ENCODE measurements at regions of chr17 and their contacts with region 1.

Region 1: DNA sequence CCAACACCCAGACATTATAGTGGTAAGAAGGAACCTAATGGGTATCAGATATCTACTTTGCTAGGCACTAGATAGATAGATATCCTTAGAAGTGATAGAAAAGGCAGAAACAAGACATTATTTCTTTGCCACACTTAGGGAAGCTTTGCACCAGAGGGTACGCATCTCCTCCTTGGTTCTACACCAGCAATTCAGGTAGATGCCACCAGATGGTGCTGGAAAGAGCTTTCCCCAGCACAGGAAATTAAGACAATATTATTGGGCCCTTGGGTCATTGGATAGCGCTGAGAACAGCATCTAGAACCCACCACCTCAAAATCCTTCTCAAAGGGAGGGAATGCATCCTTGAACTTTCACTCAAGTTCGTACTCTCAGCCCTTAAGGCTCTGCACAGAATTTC is 173.8 kb upstream of the CCL2 start:
- DNase-seq: peak; percentile 54
- ATAC-seq: peak; percentile 87
- H3K4me3 Mint-ChIP-seq: no peak overlapping the region
- H3K27ac Mint-ChIP-seq: no peak overlapping the region
- H3K4me1 Mint-ChIP-seq: peaks cover 23% of the 10 kb centered on the region
- H3K27me3 Mint-ChIP-seq: no peaks in the 10 kb centered on the region
- CTCF ChIP-seq: 0 out of 2 replicates have a peak, but pooled peaks have one; percentile 42

Region 2: GRCh38 chr17:34000639-34001038 is 80.6 kb before region 1 on chr17:
- CTCF ChIA-PET with region 1: no interaction called
- POLR2A ChIA-PET with region 1: no interaction called
- DNase-seq: no peak
- ATAC-seq: no peak
- H3K4me3 Mint-ChIP-seq: no peak overlapping the region
- H3K27ac Mint-ChIP-seq: no peak overlapping the region
- H3K4me1 Mint-ChIP-seq: no peaks in the 10 kb centered on the region; the same call in 1 of the 2 replicates
- H3K27me3 Mint-ChIP-seq: no peaks in the 10 kb centered on the region; the same call in 1 of the 2 replicates
- CTCF ChIP-seq: no peak

Region 3: DNA sequence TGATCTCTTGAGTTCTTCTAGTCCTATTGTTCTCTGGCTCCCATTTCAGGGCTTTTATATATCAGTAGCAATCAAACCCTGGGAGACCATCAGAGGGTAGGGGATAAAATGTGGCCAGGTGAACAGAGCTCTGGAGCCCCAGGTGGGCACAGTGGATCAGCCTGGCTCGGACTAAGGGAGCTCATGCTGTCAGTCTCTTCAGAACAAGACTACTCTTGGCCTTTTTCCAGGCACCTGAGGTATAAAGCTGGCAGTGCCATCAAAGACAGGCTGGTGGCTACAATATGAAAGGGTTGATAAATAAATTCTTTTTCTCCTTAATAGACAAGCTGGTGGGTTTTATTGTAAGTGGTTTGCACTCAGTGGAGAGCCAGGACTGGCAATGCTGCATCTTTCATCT is 13.8 kb after region 1 on chr17:
- CTCF ChIA-PET with region 1: no interaction called
- POLR2A ChIA-PET with region 1: no interaction called
- DNase-seq: no peak
- ATAC-seq: no peak
- H3K4me3 Mint-ChIP-seq: no peak overlapping the region
- H3K27ac Mint-ChIP-seq: no peak overlapping the region
- H3K4me1 Mint-ChIP-seq: peaks cover 16% of the 10 kb centered on the region
- H3K27me3 Mint-ChIP-seq: no peaks in the 10 kb centered on the region; the same call in 1 of the 2 replicates
- CTCF ChIP-seq: no peak

Region 4: DNA sequence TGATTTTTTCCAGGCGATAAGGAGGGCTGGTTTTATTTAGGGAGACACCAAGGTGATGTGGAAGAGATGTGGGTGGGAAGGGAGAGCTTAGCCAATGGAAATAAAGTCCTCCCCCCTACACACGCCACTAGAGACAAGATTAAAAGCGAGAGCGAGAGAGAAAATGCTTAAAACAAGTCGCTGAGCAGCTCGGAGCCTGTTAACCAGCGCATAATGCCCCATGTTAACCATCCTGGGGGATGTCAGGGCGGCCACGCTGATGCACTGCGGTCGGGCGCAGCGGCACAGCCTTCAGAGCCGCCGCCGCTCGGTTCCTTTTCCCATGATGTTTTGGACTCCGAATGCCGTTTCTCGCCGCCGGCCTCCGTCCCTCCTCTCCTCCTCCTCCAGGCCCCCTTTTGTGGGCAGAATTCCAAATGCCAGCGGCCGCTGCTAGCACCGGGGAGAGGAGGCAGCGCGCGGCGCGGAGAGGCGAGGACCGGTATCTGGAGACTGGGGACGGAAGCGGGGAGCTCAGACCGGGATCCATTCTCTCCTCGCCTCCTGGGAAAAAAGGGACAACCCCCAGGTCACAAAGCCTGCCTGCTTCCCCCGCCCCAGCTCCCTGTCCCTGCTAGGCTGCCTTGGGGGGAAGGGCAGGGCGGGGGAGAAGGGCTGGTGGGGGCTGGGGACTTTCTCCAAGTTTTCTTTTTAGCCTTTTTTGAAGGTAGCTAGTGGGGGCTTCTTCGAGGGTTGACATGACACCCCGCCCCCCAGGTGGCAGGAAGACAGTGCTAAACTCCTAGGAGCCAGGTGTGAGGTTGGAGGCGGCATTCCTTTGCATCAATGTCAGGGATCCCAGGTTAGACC is 75.7 kb after region 1 on chr17:
- CTCF ChIA-PET with region 1: interaction called, 34 read pairs
- POLR2A ChIA-PET with region 1: no interaction called
- DNase-seq: peak; percentile 85
- ATAC-seq: peak; percentile 45
- H3K4me3 Mint-ChIP-seq: peak overlapping the region; percentile 85
- H3K27ac Mint-ChIP-seq: peak overlapping the region; percentile 98
- H3K4me1 Mint-ChIP-seq: peaks cover 86% of the 10 kb centered on the region
- H3K27me3 Mint-ChIP-seq: peaks cover 14% of the 10 kb centered on the region
- CTCF ChIP-seq: no peak